G401 (cell line): ENCODE measurements at regions of chr17 and their contacts with region 1.

Region 1: DNA sequence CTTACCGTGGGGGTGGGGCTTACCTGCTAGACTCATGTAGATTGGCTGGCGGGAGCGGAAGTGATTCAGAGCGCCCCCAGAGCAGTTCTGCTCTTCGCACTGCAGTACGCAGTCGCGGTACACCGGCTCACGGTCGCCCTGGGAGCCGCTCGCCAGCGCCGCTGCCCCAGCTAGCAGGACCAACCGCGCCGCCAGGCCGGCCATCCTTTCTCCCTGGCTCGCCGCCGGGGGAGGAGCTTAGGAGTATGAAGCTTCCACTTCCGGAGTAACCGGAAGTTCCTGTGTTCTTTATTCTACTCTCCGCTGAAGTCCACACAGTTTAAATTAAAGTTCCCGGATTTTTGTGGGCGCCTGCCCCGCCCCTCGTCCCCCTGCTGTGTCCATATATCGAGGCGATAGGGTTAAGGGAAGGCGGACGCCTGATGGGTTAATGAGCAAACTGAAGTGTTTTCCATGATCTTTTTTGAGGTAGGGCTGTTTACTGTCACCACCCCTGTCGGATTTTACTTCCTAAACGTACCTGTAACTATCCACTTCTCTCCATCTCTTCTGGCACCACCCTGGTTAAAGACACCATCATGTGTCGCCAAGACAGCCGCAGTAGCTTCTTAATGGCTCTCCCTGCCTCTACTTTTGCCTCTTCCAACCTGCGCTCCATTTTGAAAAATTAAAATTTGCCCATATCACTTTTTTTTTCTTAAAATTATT is at the start of gene PGAP3:
- DNase-seq: peak; percentile 95
- total RNA-seq, gene PGAP3: 10.3 and 13.5 TPM in 2 replicates

Region 2: DNA sequence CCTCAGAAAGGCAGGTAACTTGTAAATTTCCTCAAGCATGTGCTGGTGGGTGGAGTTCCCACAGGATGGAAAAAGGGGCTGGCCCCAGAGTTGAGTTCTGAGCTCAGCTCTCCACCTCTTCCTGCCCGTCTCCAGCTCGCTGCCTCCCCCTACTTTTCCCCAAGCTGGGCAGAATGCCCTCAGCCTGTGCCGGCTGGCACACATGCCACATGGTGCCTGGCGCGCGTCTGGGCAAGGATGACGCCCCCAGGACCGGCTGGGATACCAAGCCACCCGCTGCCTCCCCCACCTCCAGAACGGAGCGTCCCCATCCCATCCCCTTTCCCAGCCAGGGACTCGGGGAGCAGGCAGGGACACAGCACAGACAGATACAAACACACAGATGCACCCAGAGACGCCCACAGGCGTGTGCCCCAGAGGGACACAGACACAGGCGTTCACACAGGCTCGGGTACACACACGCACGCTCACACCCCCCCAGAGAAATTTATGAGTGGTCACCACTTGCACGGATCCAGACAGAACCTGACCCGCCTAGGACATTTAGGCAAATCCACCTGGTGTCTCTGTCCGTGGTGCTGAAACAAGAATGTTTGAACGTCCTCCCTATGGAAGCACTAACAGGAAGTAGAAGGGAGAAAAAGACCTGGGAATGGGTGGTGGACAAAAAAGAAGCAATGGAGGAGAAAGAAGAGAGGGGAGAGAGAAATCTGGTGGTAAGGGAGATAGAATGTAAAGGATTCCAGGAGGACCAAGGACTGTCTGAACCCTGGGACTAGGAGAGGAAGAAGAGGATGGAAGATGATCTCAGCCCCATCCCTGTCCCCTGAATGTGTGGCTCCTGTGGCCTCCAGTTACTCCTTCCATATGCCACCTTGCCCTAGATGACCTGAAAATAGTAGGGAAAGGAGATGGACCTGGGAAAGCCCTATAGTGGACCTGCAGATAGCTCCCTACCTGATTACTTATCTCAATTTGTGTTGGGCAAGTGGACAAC is 95.7 kb before region 1 on chr17:
- in situ Hi-C with region 1: no loop called
- DNase-seq: peak; percentile 82

Region 3: DNA sequence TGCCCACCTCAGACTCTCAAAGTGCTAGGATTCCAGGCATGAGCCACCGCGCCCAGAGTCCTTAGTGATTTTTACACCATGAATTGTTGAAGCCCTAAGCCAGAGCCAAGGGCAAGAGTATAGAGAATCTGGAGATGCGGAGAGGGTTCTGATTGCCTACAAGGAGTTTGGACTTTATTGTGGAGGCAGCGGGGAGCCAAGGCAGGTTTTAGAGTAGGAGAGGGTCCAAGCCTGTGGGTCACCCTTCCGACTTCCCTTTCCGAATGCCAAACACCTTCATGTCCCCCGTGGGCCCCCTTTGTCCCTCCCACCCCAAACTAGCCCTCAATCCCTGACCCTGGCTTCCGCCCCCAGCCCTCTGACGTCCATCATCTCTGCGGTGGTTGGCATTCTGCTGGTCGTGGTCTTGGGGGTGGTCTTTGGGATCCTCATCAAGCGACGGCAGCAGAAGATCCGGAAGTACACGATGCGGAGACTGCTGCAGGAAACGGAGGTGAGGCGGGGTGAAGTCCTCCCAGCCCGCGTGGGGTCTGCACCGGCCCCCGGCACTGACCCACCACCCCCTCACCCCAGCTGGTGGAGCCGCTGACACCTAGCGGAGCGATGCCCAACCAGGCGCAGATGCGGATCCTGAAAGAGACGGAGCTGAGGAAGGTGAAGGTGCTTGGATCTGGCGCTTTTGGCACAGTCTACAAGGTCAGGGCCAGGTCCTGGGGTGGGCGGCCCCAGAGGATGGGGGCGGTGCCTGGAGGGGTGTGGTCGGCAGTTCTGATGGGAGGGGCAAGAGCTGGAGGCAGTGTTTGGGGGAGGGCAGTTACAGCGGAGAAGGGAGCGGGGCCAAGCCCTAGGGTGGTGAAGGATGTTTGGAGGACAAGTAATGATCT is 35.2 kb after region 1 on chr17:
- in situ Hi-C with region 1: no loop called
- DNase-seq: no peak

Region 4: DNA sequence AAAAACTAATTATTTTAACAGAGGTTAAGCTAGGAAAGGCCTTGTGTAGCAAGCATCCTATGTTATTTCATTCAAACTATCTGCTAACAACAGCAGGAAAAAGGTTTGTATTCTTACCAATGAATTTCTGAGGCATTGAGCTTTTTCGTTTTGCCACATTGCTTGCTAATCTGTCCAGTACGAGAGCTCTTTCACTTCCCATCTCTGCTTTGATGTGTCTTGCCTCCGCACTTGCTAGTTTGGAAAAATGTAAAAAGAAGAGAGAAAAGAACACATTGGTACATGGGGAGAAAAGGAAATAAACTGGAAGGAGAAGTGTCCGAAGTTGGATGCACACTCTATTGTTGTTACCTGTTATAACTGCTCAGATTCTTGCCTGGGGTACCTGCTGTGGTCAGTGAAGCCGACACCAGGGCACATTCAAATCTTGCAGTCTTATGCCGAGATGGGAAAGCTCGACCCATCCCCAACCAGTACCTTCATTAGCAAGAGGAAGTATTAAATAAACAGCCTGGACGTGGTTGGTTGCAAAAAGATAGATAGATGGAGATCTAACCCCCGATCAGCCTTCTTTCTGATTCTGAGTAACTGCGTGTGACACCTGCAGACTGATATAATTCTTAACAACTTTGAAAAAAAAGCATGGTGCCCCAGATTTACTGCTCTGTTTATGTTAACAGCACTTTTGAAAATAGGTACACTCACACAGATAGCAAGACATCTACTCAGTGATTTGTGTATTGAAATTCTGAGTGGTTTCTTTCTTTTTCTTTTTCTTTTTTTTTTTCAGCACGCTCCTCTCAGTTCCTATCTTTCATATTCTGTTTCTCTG is 89.8 kb after region 1 on chr17:
- in situ Hi-C with region 1: no loop called
- DNase-seq: no peak

Region 5: GRCh38 chr17:39980351-39981206 is 292.6 kb after region 1 on chr17 and contains the start of gene PSMD3:
- in situ Hi-C with region 1: loop called (anchors 25 kb)
- DNase-seq: peak; percentile 100
- total RNA-seq, gene PSMD3: 248 and 317 TPM in 2 replicates